Cardiac septum (tissue), 1 donor: ENCODE measurements at regions of chr4 and their contacts with region 1.

Region 1: DNA sequence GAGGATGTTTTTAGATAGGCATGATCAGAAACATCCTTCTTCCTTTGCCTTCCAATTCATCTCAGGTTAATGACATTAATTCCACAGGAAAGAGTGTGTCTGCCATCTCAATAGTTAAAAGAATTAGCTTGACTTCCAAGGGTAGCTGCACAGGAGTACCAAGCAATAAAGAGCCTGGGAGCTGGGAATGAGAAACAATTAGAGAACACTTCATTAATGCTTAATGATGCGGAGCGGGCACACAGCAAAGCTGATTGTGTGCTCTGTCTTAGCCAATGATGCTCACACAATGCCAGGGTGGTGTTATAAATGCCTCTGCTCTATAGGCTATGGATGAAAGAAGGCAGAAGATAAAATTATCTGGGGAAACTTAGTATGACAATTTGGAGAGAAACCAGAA is 1052.5 kb upstream of the LCORL start:
- DNase-seq: no peak

Region 2: DNA sequence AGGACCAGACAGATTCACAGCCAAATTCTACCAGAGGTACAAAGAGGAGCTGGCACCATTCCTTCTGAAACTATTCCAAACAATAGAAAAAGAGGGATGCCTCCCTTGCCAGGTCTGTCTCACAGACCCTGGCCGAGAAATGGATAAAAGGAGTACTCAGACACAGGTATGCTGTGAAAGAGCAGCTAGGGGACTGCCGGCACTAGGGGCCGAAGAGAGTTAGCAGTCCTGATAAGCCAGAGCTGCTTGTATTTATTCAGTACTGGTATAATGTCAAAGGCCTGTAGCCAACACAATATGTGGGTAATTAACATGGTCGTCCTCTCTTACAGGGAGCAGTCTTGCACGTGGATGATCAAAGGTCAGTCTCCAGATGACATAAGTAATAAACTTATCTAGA is 10.4 kb before region 1 on chr4:
- intact Hi-C with region 1: loop called (anchors 1 kb)
- DNase-seq: no peak